Ascending aorta (tissue), 2 donors: ENCODE measurements at regions of chr9 and their contacts with region 1.

Region 1: GRCh38 chr9:92790542-92791527 is 26.2 kb upstream of the BICD2 start:
- DNase-seq: peak in 1 of 2 donors; percentile 91
- H3K4me3 ChIP-seq: no peak overlapping the region
- H3K27ac ChIP-seq: no peak overlapping the region
- H3K4me1 ChIP-seq: no peaks in the 10 kb centered on the region
- H3K27me3 ChIP-seq: no peaks in the 10 kb centered on the region
- CTCF ChIP-seq: peak; percentile 66 to 85 (median 83)

Region 2: DNA sequence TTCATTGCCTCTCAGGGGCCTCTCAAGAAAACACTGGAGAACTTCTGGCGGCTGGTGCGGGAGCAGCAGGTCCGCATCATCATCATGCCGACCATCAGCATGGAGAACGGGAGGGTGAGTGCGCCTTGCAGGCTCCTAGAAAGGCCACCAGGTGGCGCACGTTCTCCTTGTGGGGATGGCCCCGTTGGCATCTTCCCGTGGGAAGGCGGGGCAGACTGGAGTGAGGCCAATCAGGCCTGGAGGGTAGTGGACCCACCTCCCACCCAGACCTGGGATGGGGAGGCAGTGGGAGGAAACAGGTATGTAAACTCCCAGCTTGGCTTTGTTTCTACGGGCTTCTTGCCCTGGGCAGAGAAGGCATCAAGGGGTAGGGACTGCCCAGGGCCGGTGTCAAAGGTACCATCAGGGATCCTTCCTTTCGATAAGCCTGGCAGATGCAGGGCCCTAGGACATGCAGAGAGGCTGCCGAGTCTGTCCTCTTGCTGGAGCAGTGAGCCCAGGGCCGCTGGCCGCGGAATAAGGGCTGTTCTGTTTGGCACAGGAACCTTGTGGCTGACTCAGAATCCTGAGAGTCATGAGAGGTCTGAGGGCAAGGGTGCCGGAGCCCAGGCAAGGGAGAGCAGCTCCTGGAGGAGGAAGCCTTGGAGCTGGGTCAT is 656.8 kb before region 1 on chr9:
- intact Hi-C with region 1: loop called (anchors 2 kb)
- DNase-seq: peak in 1 of 2 donors; percentile 90
- H3K4me3 ChIP-seq: peak overlapping the region; percentile 42 to 54
- H3K27ac ChIP-seq: peak overlapping the region; percentile 58 to 74
- H3K4me1 ChIP-seq: peaks cover 0 to 6% of the 10 kb centered on the region in 2 donors
- H3K27me3 ChIP-seq: no peaks in the 10 kb centered on the region
- CTCF ChIP-seq: peak; percentile 62 to 97 (median 94)

Region 3: DNA sequence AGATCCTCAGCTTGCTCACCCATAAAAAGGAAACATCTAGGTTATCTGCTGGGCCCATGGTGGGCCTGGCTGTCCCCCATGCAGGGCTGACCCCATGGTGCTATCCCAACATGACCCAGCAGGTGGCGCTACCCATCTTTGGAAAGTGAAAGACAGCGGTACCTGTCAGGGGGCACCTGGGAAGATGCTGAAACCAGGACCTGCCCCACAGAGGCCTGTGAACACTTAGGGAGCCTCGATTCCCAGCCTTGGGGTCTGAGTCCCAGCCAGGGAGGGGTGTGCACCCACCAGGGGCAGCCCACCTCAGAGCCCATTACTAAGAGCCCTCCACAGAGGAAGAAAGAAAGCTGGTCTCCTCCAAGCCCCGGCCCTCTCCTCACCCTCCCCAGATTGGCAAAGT is 74.3 kb before region 1 on chr9:
- intact Hi-C with region 1: loop called (anchors 1 kb)
- DNase-seq: no peak
- H3K4me3 ChIP-seq: no peak overlapping the region
- H3K27ac ChIP-seq: no peak overlapping the region
- H3K4me1 ChIP-seq: no peaks in the 10 kb centered on the region
- H3K27me3 ChIP-seq: no peaks in the 10 kb centered on the region
- CTCF ChIP-seq: peak; percentile 81 to 91 (median 83)